PC-3 (cell line): ENCODE measurements at regions of chr1 and their contacts with region 1.

Region 1: DNA sequence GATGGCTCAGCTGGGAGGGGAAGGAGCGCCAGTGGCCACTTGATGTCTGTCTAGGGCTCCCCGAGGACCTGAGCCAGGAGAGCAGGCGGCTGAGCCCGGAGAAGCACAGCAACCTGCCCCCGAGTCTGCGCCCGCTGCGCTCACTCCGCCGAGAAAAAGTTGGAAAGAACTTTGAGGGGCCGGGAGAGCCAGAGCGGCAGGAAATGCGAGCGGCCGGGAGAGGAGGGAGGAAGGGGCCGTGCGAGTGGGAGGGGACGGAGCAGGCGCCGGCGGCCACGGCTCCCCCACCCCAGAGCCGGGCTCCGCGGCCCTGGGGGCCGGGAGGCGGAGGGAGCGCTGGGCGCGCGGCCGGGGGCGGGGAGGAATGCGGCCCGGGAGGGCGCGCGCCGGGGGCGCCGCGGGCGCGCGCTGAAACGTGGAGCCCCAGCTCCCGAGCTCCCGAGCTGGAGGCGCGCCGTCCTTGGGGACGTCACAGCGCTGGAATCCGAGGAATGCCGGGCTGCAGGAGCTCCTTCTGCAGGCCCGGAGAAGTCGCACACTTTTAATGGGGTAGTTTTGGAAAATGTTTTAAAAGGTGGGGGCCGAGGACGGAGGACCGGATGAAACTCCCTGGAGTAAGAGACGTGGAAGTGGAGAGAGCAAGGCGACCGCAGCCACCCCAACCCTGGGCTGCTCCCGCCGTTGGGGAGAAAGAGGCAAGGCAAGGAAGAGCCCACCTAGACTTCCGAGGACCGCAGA is at the start of gene PTPN14:
- DNase-seq: peak; percentile 99
- ATAC-seq: peak; percentile 71
- H3K4me3 ChIP-seq: peak within 1 kb of the TSS; percentile 88
- H3K27ac ChIP-seq: peak within 1 kb of the TSS; percentile 95
- H3K4me1 ChIP-seq: peaks cover 39% of the 10 kb centered on the region
- H3K27me3 ChIP-seq: no peaks in the 10 kb centered on the region
- CTCF ChIP-seq: peak; percentile 52; the same call in 1 of the 2 replicates
- total RNA-seq, gene PTPN14: 12.6 and 17.1 TPM in 2 replicates

Region 2: GRCh38 chr1:214328770-214329469 is 222.7 kb before region 1 on chr1:
- CTCF ChIA-PET with region 1: interaction called, 4 read pairs
- POLR2A ChIA-PET with region 1: interaction called, 7 read pairs
- intact Hi-C with region 1: loop called (anchors 5 kb)
- DNase-seq: peak; percentile 96
- ATAC-seq: peak; percentile 93
- H3K4me3 ChIP-seq: no peak overlapping the region
- H3K27ac ChIP-seq: no peak overlapping the region
- H3K4me1 ChIP-seq: peaks cover 4% of the 10 kb centered on the region
- H3K27me3 ChIP-seq: no peaks in the 10 kb centered on the region
- CTCF ChIP-seq: peak; percentile 96

Region 3: GRCh38 chr1:214446772-214447556 is 104.6 kb before region 1 on chr1:
- CTCF ChIA-PET with region 1: no interaction called
- POLR2A ChIA-PET with region 1: interaction called, 5 read pairs
- intact Hi-C with region 1: loop called (anchors 1 kb)
- DNase-seq: peak; percentile 99
- ATAC-seq: peak; percentile 86
- H3K4me3 ChIP-seq: peak overlapping the region; percentile 59
- H3K27ac ChIP-seq: peak overlapping the region; percentile 95
- H3K4me1 ChIP-seq: peaks cover 48% of the 10 kb centered on the region
- H3K27me3 ChIP-seq: no peaks in the 10 kb centered on the region
- CTCF ChIP-seq: no peak

Region 4: GRCh38 chr1:214476958-214477870 is 74.4 kb before region 1 on chr1:
- CTCF ChIA-PET with region 1: interaction called, 16 read pairs
- POLR2A ChIA-PET with region 1: interaction called, 25 read pairs
- intact Hi-C with region 1: loop called (anchors 1 kb)
- DNase-seq: no peak
- ATAC-seq: no peak
- H3K4me3 ChIP-seq: no peak overlapping the region; the same call in 1 of the 2 replicates
- H3K27ac ChIP-seq: peak overlapping the region; percentile 56; the same call in 1 of the 2 replicates
- H3K4me1 ChIP-seq: peaks cover 39% of the 10 kb centered on the region
- H3K27me3 ChIP-seq: no peaks in the 10 kb centered on the region
- CTCF ChIP-seq: no peak

Region 5: DNA sequence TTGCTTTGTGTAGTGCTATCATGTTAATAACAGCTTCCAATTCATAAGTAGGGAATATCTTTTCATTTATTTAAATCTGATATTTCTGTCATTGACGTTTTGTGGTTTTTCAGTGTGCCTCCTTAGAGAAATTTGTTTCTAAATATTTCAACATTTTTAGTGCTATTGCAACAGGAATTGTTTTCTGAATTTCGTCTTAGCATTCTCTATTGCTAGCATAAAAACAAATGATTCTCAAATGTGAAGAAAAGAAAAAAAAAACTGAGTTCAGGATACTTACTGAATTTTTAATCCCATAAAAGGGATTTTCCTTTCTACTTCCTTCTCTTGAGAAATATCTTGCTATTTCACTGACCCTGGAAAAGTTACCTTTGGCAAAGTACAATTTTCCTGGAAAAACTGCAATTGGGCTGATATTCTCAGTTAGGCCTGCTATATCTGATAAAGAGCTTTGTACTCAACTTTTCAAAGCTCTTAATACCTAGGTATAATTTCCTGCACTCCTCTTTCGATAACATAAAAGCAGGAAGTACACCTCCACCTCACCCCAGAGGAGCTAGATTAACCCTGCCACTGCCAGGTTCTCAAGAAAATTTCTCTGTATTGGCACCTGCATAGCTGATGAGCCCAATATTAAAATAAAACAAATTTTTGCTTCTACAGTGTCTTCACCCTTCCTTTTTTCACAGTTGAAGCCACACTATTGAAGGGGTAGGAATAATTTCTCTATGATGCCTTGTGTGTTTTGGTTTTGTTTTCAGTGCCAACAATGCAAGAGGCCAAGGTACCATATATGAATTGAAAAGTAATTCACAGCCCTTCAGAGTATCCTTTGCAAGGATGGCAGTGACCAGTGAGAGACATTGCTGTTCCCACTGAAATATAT is 35.8 kb before region 1 on chr1:
- CTCF ChIA-PET with region 1: interaction called, 3 read pairs
- POLR2A ChIA-PET with region 1: interaction called, 7 read pairs
- intact Hi-C with region 1: loop called (anchors 1 kb)
- DNase-seq: no peak
- ATAC-seq: no peak
- H3K4me3 ChIP-seq: peak overlapping the region; percentile 37
- H3K27ac ChIP-seq: peak overlapping the region; percentile 39
- H3K4me1 ChIP-seq: peaks cover 49% of the 10 kb centered on the region
- H3K27me3 ChIP-seq: no peaks in the 10 kb centered on the region
- CTCF ChIP-seq: no peak